ENCODE measurements at regions of chr5 and their contacts with region 1.

Region 1: GRCh38 chr5:80308526-80308925 is 11.3 kb upstream of the SPZ1 start:
- DNase-seq: no peak
- H3K4me3 Mint-ChIP-seq: no peak overlapping the region
- H3K27ac Mint-ChIP-seq: no peak overlapping the region
- H3K4me1 Mint-ChIP-seq: no peaks in the 10 kb centered on the region
- H3K27me3 Mint-ChIP-seq: no peaks in the 10 kb centered on the region

Region 2: DNA sequence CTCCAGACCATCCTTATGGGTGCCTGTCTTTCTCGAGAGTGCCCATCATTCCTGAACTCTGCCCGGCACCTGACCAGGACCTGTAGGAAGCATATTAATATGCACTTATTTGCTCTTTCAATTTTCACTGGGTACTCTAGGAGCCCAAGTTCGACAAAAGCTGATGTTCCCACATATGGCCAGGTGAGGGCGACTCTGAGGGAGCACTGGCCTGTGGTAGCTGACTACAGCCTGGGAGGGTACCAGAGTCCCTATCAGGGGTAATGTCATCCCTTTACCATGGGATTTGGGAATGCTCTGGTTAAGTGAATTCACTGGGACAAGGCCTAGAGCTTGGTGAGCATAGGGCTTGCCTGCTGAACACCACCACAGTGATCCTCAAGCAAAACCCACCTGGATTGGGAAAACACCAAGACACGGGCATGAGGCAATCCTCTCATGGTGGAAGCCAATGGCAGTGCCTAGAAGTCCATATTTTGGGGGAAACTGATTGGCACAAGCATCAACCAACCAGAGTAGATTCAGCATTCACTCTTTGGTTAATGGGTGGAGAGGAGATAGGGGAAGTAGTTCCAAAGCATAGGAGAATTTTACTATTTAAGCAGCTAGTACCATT is 429.7 kb before region 1 on chr5:
- CTCF ChIA-PET with region 1: interaction called, 6 read pairs
- intact Hi-C with region 1: loop called (anchors 5 kb)
- DNase-seq: peak; percentile 65
- H3K4me3 Mint-ChIP-seq: no peak overlapping the region
- H3K27ac Mint-ChIP-seq: no peak overlapping the region
- H3K4me1 Mint-ChIP-seq: no peaks in the 10 kb centered on the region
- H3K27me3 Mint-ChIP-seq: no peaks in the 10 kb centered on the region

Region 3: DNA sequence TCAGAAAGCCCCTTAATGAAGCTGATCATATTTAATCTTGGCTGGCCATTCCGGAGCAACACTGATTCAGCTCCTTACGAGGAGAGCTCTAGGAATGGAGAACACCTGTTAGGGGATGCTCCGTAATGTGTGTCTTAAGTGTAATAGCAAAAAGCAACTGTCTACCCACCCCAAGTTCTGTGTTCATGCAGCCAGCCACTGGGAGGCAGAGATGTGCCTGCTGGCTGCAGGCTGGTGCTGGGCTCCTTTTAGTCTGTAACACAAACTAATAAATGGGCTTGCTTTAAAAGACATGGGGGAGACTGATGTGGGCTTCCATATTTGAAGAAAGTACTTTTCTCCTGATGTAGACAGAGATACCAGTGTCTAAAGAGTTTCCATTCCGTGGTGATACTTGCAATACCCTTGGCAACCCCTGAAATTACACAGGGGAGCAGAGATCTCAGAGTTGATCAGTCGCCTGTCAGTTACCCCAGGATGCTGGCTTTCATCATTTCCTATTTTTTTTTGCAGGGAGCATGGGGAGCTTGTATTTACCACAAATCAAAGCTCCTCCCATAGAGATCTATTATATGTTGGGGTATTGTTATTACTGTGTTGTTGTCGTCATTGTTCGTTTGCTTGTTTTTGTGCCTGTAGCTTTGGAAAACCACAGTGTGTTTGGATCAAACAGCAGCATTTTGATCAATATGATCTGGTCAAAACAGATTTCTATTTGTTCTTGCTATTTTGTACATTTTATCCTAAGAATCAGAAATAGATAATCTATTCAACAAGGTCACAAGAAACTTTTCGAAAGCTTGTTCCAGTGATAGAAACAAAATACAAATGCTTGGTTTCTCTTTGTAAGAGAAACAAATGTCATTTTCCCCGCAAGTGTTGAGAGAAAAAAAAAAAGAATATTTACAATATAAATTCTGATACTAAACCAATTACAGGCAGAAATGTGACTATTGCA is 383.3 kb before region 1 on chr5:
- CTCF ChIA-PET with region 1: no interaction called
- intact Hi-C with region 1: loop called (anchors 10 kb)
- DNase-seq: peak; percentile 30
- H3K4me3 Mint-ChIP-seq: no peak overlapping the region
- H3K27ac Mint-ChIP-seq: no peak overlapping the region
- H3K4me1 Mint-ChIP-seq: no peaks in the 10 kb centered on the region
- H3K27me3 Mint-ChIP-seq: no peaks in the 10 kb centered on the region

Region 4: GRCh38 chr5:80101993-80102392 is 206.5 kb before region 1 on chr5:
- CTCF ChIA-PET with region 1: interaction called, 183 read pairs
- intact Hi-C with region 1: no loop called
- DNase-seq: no peak
- H3K4me3 Mint-ChIP-seq: no peak overlapping the region
- H3K27ac Mint-ChIP-seq: no peak overlapping the region
- H3K4me1 Mint-ChIP-seq: peaks cover 31% of the 10 kb centered on the region
- H3K27me3 Mint-ChIP-seq: no peaks in the 10 kb centered on the region

Region 5: GRCh38 chr5:80275347-80275746 is 33.2 kb before region 1 on chr5:
- CTCF ChIA-PET with region 1: interaction called, 11 read pairs
- intact Hi-C with region 1: loop called (anchors 2 kb)
- DNase-seq: peak; percentile 53
- H3K4me3 Mint-ChIP-seq: no peak overlapping the region
- H3K27ac Mint-ChIP-seq: no peak overlapping the region
- H3K4me1 Mint-ChIP-seq: peaks cover 26% of the 10 kb centered on the region
- H3K27me3 Mint-ChIP-seq: no peaks in the 10 kb centered on the region

Region 6: GRCh38 chr5:80284720-80285119 is 23.8 kb before region 1 on chr5:
- CTCF ChIA-PET with region 1: interaction called, 17 read pairs
- intact Hi-C with region 1: no loop called
- DNase-seq: peak; percentile 57
- H3K4me3 Mint-ChIP-seq: no peak overlapping the region
- H3K27ac Mint-ChIP-seq: peak overlapping the region; percentile 74
- H3K4me1 Mint-ChIP-seq: peaks cover 21% of the 10 kb centered on the region
- H3K27me3 Mint-ChIP-seq: no peaks in the 10 kb centered on the region

Measured in activated naive CD4-positive, alpha-beta T cell treated with anti-CD3 and anti-CD28 coated beads for 36 hours (primary cell).